Activated CD4-positive, alpha-beta memory T cell treated with anti-CD3 and anti-CD28 coated beads, Interleukin-2, amount 10 ng/mL, durations not matched to agents 7 days and 5 days (primary cell): ENCODE measurements at regions of chr10 and their contacts with region 1.

Region 1: GRCh38 chr10:33008499-33009243 is 50.6 kb upstream of the ITGB1 start:
- DNase-seq: peak; percentile 70
- H3K4me3 Mint-ChIP-seq: peak overlapping the region; percentile 51
- H3K27ac Mint-ChIP-seq: peak overlapping the region; percentile 78
- H3K4me1 Mint-ChIP-seq: peaks cover 53% of the 10 kb centered on the region
- H3K27me3 Mint-ChIP-seq: no peaks in the 10 kb centered on the region

Region 2: DNA sequence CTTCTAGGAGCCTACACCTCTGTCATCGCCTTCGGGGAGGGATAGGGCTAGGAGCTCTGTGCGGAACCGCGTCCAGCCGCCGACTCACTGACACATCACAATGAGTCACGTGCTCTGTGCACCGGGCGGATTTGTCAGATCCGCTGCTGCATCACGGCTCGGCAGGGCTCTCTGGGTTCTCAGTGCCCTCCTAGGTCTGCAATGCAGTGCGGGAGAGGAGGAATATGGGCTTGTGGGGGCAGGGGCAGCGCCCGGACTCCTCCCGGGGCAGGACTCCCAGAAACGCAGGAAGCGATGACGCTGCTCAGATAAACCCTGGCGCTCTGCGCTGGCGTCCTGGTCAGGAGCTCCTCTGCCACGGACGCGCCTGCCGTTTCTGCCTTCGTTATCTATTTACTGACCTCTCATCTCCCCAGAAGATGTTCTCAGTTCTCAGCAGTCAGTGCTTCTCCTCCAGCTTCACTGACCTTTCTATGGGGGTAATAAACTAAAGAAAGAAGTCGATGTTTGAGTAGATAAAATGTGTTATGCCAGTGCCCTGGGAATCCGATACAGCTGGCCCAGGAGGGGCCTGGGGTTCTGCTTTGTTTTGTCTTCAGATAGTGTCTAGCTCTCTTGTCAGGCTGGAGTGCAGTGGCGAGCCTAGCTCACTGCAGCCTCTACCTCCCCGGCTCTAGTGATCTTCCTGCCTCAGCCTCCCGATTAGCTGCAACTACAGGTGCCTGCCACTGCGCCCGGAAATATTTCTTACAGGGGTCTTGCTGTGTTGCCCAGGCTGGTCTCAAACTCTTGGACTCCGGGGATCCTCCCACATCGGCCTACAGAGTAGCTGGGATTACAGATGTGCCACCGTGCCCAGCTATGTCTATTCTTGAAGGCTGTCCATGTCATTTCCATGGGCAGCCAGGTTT is 27.9 kb before region 1 on chr10:
- CTCF ChIA-PET with region 1: interaction called, 16 read pairs
- POLR2A ChIA-PET with region 1: interaction called, 15 read pairs
- DNase-seq: peak; percentile 89
- H3K4me3 Mint-ChIP-seq: peak overlapping the region; percentile 88
- H3K27ac Mint-ChIP-seq: peak overlapping the region; percentile 93
- H3K4me1 Mint-ChIP-seq: peaks cover 42% of the 10 kb centered on the region
- H3K27me3 Mint-ChIP-seq: no peaks in the 10 kb centered on the region

Region 3: DNA sequence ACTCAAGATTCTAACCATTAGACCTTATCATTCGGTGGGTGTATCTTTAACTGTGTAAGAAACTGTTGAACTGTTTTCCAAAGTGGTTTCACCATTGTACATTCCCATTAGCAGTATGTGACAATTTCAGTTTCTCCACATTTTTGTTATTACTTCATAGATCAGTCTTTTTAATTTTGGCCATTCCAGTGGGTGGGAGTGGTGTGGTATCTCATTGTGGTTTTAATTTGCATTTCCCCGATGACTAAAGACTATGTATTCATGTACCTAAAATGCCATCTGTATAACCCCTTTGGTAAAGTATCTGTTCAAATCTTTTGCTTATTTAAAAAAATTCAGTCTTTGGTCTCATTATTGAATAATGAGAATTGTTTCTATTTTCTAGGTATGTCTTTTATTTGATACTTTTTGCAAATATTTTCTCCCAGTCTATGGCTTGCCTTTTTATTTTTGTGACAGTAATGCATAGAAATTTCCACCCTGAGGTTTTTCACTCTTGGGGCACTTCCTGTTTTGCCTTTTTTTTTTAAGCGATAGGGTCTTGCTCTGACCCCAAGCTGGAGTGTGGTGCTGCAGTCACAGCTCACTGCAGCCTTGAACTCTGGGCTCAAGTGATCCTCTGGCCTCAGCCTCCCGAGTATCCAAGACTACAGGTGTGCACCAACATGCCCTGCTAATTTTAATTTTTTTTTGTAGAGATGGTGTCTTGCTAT is 90.4 kb after region 1 on chr10:
- CTCF ChIA-PET with region 1: interaction called, 4 read pairs
- POLR2A ChIA-PET with region 1: interaction called, 11 read pairs
- DNase-seq: no peak
- H3K4me3 Mint-ChIP-seq: peak overlapping the region; percentile 11
- H3K27ac Mint-ChIP-seq: peak overlapping the region; percentile 89
- H3K4me1 Mint-ChIP-seq: peaks cover 66% of the 10 kb centered on the region
- H3K27me3 Mint-ChIP-seq: no peaks in the 10 kb centered on the region

Region 4: GRCh38 chr10:33134011-33134751 is 125.5 kb after region 1 on chr10:
- CTCF ChIA-PET with region 1: interaction called, 31 read pairs
- POLR2A ChIA-PET with region 1: interaction called, 14 read pairs
- DNase-seq: peak; percentile 84
- H3K4me3 Mint-ChIP-seq: no peak overlapping the region
- H3K27ac Mint-ChIP-seq: peak overlapping the region; percentile 90
- H3K4me1 Mint-ChIP-seq: peaks cover 91% of the 10 kb centered on the region
- H3K27me3 Mint-ChIP-seq: no peaks in the 10 kb centered on the region